Left cardiac atrium (tissue), 4 donors: ENCODE measurements at regions of chr2 and their contacts with region 1.

Region 1: GRCh38 chr2:112481050-112481527 is 867 bp upstream of the TTL start:
- DNase-seq: peak; percentile 84
- ATAC-seq: peak; percentile 87 to 91

Region 2: DNA sequence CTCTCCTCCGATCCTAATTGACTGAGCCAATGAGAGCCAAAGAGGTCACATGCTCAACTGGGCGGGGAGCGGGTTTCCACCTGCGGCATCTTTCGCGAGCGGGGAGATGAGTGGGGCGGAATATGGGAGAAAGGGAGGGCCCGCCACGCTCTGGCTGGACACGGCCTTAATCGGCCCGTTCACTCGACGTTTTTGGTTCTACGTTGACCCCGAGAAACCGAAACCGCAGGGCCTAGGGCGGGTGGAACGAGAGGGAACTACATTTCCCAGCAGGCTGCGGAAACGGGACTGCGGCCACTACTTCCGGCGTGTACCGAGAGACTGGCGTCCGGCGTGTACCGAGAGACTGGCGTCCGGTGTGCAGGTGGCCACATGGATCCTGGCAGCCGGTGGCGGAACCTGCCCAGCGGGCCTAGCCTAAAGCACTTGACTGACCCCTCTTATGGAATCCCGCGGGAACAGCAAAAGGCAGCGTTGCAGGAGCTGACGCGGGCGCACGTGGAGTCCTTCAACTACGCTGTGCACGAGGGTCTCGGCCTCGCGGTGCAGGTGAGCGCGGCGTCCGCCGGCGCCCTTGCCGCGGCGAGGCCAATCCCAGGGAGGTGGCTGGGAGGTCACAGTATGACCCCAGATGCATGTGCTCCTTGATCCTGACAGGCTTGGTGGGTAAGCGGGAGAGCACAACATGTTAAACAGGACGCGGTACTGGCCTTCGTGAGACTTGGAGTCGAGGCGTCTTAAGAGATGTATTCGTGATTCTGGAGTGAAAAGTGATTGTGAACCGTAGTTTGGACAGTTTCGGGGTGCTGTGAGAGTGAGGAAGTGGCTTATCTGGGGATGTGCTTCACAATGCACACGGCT is 61.3 kb after region 1 on chr2 and contains the start of gene POLR1B:
- intact Hi-C with region 1: loop called (anchors 5 to 10 kb)
- DNase-seq: peak; percentile 90
- ATAC-seq: peak; percentile 95 to 97
- total RNA-seq, gene POLR1B: 9.4 to 16.0 TPM

Region 3: DNA sequence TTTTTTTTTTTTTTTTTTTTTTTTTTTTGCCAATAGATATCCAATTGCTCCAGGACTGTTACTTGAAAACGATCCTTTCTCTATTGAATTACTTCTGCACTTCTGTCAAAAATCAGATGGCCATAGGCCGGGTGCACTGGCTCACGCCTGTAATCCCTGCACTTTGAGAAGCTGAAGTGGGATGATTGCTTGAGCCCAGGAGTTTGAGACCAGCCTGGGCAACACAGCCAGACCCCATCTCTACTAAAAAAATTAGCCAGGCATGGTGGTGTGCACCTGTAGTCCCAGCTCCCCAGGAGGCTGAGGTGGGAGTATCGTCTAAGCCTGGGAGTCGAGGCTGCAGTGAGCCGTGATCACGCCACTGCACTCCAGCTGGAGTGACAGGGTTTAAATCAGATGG is 99.0 kb after region 1 on chr2:
- intact Hi-C with region 1: loop called in 1 of 2 experiments (anchors 2 kb)
- DNase-seq: no peak
- ATAC-seq: no peak

Region 4: GRCh38 chr2:112645310-112646101 is 164.4 kb after region 1 on chr2 and contains the start of gene SLC20A1:
- intact Hi-C with region 1: loop called in 1 of 2 experiments (anchors 5 kb)
- DNase-seq: peak; percentile 97
- ATAC-seq: peak; percentile 96 to 97
- total RNA-seq, gene SLC20A1: 15.1 to 38.1 TPM